Activated T-helper 2 cell treated with anti-CD3 and anti-CD28 coated beads, Interferon-gamma antibody, Interleukin-2, Interleukin-4, amounts not matched to agents 10 μg/mL and 5 μg/mL and 100 μg/mL, durations not matched to agents 14 hours and 24 hours and 36 hours (primary cell): ENCODE measurements at regions of chr2 and their contacts with region 1.

Region 1: GRCh38 chr2:135985018-135985825 is at the start of gene DARS1:
- DNase-seq: peak; percentile 80
- H3K4me3 Mint-ChIP-seq: peak within 1 kb of the TSS; percentile 94
- H3K27ac Mint-ChIP-seq: peak within 1 kb of the TSS; percentile 98
- H3K4me1 Mint-ChIP-seq: peaks cover 41% of the 10 kb centered on the region
- H3K27me3 Mint-ChIP-seq: no peaks in the 10 kb centered on the region
- total RNA-seq, gene DARS1: 179 and 183 TPM in 2 replicates

Region 2: DNA sequence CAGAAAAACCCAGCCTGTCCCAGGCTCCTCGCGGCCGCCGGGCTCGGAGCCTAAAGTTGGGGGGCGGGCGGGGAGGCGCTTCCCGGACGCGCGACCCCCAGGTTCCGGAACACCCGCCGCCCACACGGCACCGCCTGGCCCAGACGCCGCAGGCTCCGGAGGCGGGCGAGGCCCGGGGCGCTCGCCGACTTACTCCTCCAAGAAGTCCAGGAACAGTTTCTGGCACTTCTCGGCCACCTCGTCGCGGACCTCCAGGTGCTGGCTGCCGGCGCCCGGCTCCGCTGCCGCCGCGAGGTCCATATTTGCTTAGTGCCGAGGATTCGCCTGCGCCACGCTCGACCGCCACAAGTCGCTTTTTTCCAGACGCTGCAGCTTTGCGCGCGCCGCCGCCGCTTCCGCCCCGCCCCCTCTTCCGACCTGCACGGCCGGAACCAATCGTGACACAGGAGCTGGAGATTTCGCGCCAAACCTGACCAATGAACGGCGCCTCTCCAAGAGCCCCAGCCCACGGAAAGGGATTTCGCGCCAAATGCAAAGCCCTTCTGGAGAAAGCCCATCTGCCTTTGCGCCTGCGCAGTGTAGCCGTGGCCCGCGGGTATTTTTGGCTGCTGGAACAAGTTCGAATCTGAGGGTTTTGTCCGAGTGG is 109.0 kb before region 1 on chr2 and contains the start of gene MCM6:
- intact Hi-C with region 1: loop called (anchors 1 kb)
- DNase-seq: peak; percentile 98
- H3K4me3 Mint-ChIP-seq: peak within 1 kb of the TSS; percentile 95
- H3K27ac Mint-ChIP-seq: peak within 1 kb of the TSS; percentile 92
- H3K4me1 Mint-ChIP-seq: peaks cover 37% of the 10 kb centered on the region
- H3K27me3 Mint-ChIP-seq: no peaks in the 10 kb centered on the region
- total RNA-seq, gene MCM6: 190 and 191 TPM in 2 replicates

Region 3: DNA sequence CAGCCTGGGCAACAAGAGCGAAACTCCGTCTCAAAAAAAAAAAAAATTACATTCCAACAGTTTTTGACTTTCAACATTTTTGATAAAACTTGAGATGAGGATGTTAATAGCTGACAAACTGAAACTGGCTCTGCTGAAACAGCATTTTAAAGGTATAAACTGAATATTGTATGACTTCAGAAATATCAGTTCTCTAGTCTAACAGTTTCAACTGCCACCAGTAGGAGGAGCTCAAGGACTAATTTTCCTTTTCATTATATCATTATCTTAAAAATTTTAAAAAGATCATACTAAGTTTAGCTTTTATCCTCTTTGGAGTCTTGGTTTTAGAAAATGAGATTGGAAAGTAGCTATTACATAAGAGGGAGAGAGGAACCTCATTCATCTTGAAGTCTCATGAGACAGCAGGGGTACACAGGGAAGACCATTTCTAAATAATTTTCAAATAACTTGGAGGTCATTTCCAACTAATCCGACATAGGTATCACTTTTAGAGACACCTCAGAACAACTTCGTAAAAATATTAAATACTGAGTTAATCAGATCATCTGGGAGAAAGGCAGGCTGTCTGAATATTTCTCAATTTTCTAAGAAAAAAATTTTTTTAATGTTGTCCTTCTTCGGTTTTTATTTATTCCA is 71.4 kb before region 1 on chr2:
- intact Hi-C with region 1: loop called (anchors 5 kb)
- DNase-seq: no peak
- H3K4me3 Mint-ChIP-seq: no peak overlapping the region
- H3K27ac Mint-ChIP-seq: peak overlapping the region; percentile 76
- H3K4me1 Mint-ChIP-seq: peaks cover 14% of the 10 kb centered on the region
- H3K27me3 Mint-ChIP-seq: no peaks in the 10 kb centered on the region

Region 4: GRCh38 chr2:135931776-135932443 is 53.3 kb before region 1 on chr2:
- intact Hi-C with region 1: loop called (anchors 5 kb)
- DNase-seq: no peak
- H3K4me3 Mint-ChIP-seq: no peak overlapping the region
- H3K27ac Mint-ChIP-seq: peak overlapping the region; percentile 34
- H3K4me1 Mint-ChIP-seq: peaks cover 50% of the 10 kb centered on the region
- H3K27me3 Mint-ChIP-seq: no peaks in the 10 kb centered on the region

Region 5: DNA sequence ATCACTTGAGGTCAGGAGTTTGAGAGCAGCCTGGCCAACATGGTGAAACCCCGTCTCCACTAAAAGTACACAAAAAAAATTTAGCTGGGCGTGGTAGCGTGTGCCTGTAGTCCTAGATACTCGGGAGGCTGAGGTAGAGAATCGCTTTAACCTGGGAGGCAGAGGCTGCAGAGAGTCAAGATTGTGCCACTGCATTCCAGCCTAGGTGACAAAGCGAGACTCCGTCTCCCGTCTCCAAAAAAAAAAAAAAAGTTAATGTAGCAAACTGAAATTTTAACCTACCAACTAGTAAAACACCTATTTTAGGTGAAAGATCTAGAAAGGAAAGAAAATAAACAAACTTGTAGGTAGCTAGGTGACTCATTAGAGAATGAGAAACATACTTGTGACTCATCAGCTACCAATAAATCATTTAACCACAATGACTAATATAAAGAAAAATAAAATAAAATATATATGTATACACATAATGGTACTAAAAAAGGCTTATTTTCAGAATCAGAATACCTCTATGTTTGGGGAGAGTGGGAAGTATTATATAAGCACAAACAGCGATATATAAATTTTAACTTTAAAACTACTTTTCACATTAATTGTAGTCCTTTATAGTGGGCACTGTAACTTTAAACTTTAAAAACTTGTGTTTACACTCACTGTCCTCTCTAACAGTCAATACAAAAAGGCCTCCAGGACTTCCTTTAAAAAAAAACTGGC is 36.4 kb before region 1 on chr2:
- intact Hi-C with region 1: loop called (anchors 5 kb)
- DNase-seq: no peak
- H3K4me3 Mint-ChIP-seq: no peak overlapping the region
- H3K27ac Mint-ChIP-seq: peak overlapping the region; percentile 89
- H3K4me1 Mint-ChIP-seq: peaks cover 63% of the 10 kb centered on the region
- H3K27me3 Mint-ChIP-seq: no peaks in the 10 kb centered on the region

Region 6: GRCh38 chr2:135960656-135961551 is 24.3 kb before region 1 on chr2:
- intact Hi-C with region 1: loop called (anchors 1 kb)
- DNase-seq: peak; percentile 32
- H3K4me3 Mint-ChIP-seq: peak overlapping the region; percentile 66
- H3K27ac Mint-ChIP-seq: peak overlapping the region; percentile 96
- H3K4me1 Mint-ChIP-seq: peaks cover 57% of the 10 kb centered on the region
- H3K27me3 Mint-ChIP-seq: no peaks in the 10 kb centered on the region

Region 7: GRCh38 chr2:136284226-136285119 is 299.3 kb after region 1 on chr2:
- intact Hi-C with region 1: no loop called
- DNase-seq: no peak
- H3K4me3 Mint-ChIP-seq: no peak overlapping the region
- H3K27ac Mint-ChIP-seq: peak overlapping the region; percentile 59
- H3K4me1 Mint-ChIP-seq: peaks cover 46% of the 10 kb centered on the region
- H3K27me3 Mint-ChIP-seq: no peaks in the 10 kb centered on the region